MCF 10A (cell line): ENCODE measurements at regions of chr7 and their contacts with region 1.

Region 1: DNA sequence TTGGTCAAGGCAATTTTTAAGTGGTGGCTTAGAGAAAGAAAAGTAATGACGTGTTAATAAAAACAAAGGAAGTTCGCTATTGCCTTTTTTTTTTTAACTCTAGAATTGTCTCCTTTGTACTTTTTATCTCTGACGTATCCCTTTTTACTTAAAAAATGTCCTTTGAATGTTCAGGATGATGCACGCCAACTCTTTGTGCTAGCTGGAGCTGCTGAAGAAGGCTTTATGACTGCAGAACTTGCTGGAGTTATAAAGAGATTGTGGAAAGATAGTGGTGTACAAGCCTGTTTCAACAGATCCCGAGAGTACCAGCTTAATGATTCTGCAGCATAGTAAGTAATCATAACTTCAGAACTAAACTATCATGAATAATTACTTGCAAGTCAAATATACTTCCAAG is 64.4 kb downstream of the GNAI1 start:
- DNase-seq: no peak
- H3K4me3 Mint-ChIP-seq: no peak overlapping the region
- H3K27ac Mint-ChIP-seq: no peak overlapping the region
- H3K4me1 Mint-ChIP-seq: peaks cover 6% of the 10 kb centered on the region
- H3K27me3 Mint-ChIP-seq: no peaks in the 10 kb centered on the region
- CTCF ChIP-seq: no peak

Region 2: DNA sequence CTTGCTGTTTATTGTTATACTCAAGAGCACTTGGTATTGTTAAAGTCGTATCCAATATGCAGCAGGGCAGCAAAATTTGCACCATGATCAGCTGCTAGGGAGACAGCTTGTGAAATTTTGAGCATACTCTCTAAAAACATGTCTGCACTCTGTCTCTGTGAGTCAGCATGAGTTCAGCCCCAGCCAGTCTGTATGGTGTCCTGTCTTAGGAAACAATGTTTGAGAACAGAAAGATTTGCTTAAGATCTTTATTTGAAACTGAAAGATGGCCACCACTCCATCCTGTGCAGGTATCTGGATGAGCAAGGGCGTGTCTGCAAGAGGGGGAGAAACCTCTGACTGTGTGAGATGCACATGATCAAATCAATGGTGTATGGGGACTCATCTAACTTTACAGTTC is 32.7 kb after region 1 on chr7:
- CTCF ChIA-PET with region 1: no interaction called
- POLR2A ChIA-PET with region 1: no interaction called
- intact Hi-C with region 1: no loop called
- DNase-seq: peak; percentile 59
- H3K4me3 Mint-ChIP-seq: no peak overlapping the region
- H3K27ac Mint-ChIP-seq: peak overlapping the region; percentile 66
- H3K4me1 Mint-ChIP-seq: peaks cover 16% of the 10 kb centered on the region
- H3K27me3 Mint-ChIP-seq: no peaks in the 10 kb centered on the region
- CTCF ChIP-seq: no peak

Region 3: GRCh38 chr7:81457852-81458522 is 1258.9 kb after region 1 on chr7:
- CTCF ChIA-PET with region 1: no interaction called
- POLR2A ChIA-PET with region 1: no interaction called
- intact Hi-C with region 1: no loop called
- DNase-seq: peak; percentile 37
- H3K4me3 Mint-ChIP-seq: no peak overlapping the region
- H3K27ac Mint-ChIP-seq: no peak overlapping the region
- H3K4me1 Mint-ChIP-seq: peaks cover 6% of the 10 kb centered on the region
- H3K27me3 Mint-ChIP-seq: no peaks in the 10 kb centered on the region
- CTCF ChIP-seq: peak; percentile 46

Region 4: GRCh38 chr7:81574723-81575326 is 1375.8 kb after region 1 on chr7:
- CTCF ChIA-PET with region 1: interaction called, 12 read pairs
- POLR2A ChIA-PET with region 1: no interaction called
- intact Hi-C with region 1: no loop called
- DNase-seq: no peak
- H3K4me3 Mint-ChIP-seq: no peak overlapping the region
- H3K27ac Mint-ChIP-seq: no peak overlapping the region
- H3K4me1 Mint-ChIP-seq: no peaks in the 10 kb centered on the region
- H3K27me3 Mint-ChIP-seq: peaks cover 12% of the 10 kb centered on the region
- CTCF ChIP-seq: no peak